Endothelial cell of umbilical vein (primary cell): ENCODE measurements at regions of chr12 and their contacts with region 1.

Region 1: DNA sequence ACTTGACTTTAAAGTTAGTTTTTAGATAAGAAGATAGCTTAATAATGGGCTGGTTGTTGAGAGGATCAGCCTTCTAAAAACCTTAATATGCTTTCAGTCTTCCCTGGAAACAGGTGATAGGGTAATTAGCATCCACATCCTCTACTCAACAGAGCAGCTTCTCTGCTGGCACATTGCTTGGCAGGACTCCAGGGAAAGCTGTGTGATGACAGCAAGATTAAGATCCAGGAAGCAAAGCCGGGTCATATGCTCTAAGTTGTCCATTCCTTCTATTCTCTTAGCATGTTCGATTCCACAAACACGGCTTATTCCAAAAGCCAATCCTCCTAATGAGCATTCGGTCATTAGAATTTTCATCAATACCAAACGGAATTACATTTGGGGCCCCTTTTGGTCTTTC is 87.0 kb downstream of the HMGA2 start:
- DNase-seq: peak; percentile 77
- H3K4me3 ChIP-seq: no peak overlapping the region
- H3K27ac ChIP-seq: no peak overlapping the region
- H3K4me1 ChIP-seq: peaks cover 9% of the 10 kb centered on the region
- H3K27me3 ChIP-seq: no peaks in the 10 kb centered on the region
- CTCF ChIP-seq: no peak
- POLR2A ChIP-seq: no peak

Region 2: DNA sequence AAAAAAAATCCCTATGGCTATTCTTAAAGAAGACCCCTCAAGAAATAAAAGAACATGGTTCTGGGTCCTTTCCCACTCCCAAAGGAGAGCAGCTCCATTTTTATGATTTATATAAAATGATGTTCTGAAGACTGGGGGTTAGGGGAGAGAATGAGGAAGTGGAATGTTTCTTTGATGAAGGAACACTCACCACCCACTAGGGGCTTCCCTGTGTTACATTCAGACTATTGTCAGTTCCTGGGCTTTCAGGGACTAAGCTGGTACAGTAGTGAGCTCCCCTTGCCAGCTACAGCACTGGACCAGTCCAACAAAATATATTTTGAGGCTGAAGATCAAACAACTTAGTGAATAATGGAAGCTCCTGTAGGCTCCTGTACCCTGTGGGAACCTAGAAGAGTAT is 11.9 kb after region 1 on chr12:
- CTCF ChIA-PET with region 1: interaction called, 3 read pairs
- POLR2A ChIA-PET with region 1: no interaction called
- dilution Hi-C with region 1: no loop called
- intact Hi-C with region 1: loop called (anchors 2 kb)
- DNase-seq: no peak
- H3K4me3 ChIP-seq: no peak overlapping the region
- H3K27ac ChIP-seq: no peak overlapping the region
- H3K4me1 ChIP-seq: peaks cover 31% of the 10 kb centered on the region
- H3K27me3 ChIP-seq: no peaks in the 10 kb centered on the region
- CTCF ChIP-seq: no peak
- POLR2A ChIP-seq: no peak